Astrocyte of the spinal cord (primary cell): ENCODE measurements at regions of chr14 and their contacts with region 1.

Region 1: GRCh38 chr14:23727566-23728335 is 91.6 kb downstream of the DHRS2 start:
- DNase-seq: peak; percentile 24
- H3K4me3 ChIP-seq: no peak overlapping the region
- CTCF ChIP-seq: peak; percentile 24

Region 2: GRCh38 chr14:23406244-23406643 is 321.5 kb before region 1 on chr14:
- in situ Hi-C with region 1: no loop called
- DNase-seq: no peak
- H3K4me3 ChIP-seq: no peak overlapping the region
- CTCF ChIP-seq: no peak

Region 3: DNA sequence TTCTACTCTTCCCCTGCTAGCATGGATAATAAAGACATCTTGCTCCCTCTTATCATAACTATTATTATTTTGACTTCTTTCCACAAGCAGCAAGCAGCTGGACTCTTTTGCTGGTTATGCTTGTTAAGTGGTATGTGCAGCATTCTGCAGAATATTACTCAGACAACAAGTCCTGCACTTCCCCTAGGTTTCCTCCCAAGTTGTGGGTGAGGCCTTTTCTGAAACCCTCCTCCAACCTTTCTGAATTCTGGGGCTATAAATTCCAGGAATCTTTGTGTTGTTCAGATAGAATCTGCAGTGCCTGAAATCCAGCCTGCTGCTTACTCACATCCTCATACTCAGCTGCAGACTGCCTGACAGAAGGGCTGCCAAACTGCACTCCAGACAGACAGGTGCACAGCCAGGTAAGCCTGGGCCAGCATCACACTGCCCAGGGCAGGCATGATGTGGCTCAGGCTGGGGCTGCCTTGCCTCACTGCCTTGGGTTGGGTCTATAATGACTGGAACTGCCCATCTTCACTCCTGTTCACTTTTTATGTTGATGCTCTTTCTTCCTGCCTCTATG is 97.8 kb before region 1 on chr14:
- in situ Hi-C with region 1: loop called (anchors 10 kb)
- DNase-seq: no peak
- H3K4me3 ChIP-seq: no peak overlapping the region
- CTCF ChIP-seq: no peak

Region 4: GRCh38 chr14:23665375-23666192 is 62.2 kb before region 1 on chr14:
- in situ Hi-C with region 1: no loop called
- DNase-seq: peak; percentile 52
- H3K4me3 ChIP-seq: no peak overlapping the region
- CTCF ChIP-seq: peak; percentile 73